Activated naive CD4-positive, alpha-beta T cell treated with anti-CD3 and anti-CD28 coated beads for 36 hours (primary cell): ENCODE measurements at regions of chr18 and their contacts with region 1.

Region 1: GRCh38 chr18:8478166-8478967 is 130.9 kb upstream of the RAB12 start:
- DNase-seq: peak; percentile 68
- H3K4me3 Mint-ChIP-seq: no peak overlapping the region
- H3K27ac Mint-ChIP-seq: no peak overlapping the region
- H3K4me1 Mint-ChIP-seq: no peaks in the 10 kb centered on the region
- H3K27me3 Mint-ChIP-seq: peaks cover 7% of the 10 kb centered on the region

Region 2: DNA sequence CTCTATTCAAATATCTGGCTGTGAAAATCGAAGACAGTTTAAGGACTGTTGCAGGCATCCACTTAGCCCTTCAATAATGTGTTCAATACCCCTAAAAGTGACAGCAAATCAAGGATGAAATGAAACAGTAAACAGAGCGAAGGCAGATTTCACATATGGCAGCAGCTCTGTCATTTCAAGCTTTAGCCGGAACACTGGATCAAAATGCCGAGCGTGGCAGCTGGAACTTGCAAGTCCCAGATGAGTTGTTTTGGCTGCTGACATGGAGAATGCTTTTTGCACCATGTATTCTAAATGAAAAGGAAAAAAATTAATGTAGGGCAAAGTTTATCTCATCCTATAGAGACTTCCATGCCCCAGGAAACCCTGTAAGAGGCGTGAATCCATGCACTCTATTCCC is 1229.5 kb before region 1 on chr18:
- CTCF ChIA-PET with region 1: no interaction called
- intact Hi-C with region 1: no loop called
- DNase-seq: no peak
- H3K4me3 Mint-ChIP-seq: no peak overlapping the region
- H3K27ac Mint-ChIP-seq: no peak overlapping the region
- H3K4me1 Mint-ChIP-seq: no peaks in the 10 kb centered on the region
- H3K27me3 Mint-ChIP-seq: no peaks in the 10 kb centered on the region

Region 3: GRCh38 chr18:8988261-8988871 is 510.0 kb after region 1 on chr18:
- CTCF ChIA-PET with region 1: interaction called, 6 read pairs
- intact Hi-C with region 1: loop called (anchors 5 kb)
- DNase-seq: peak; percentile 71
- H3K4me3 Mint-ChIP-seq: no peak overlapping the region
- H3K27ac Mint-ChIP-seq: no peak overlapping the region
- H3K4me1 Mint-ChIP-seq: no peaks in the 10 kb centered on the region
- H3K27me3 Mint-ChIP-seq: peaks cover 6% of the 10 kb centered on the region